Activated B cell treated with CpG ODN at 0.5 μM for 24 hours (primary cell): ENCODE measurements at regions of chrX and their contacts with region 1.

Region 1: DNA sequence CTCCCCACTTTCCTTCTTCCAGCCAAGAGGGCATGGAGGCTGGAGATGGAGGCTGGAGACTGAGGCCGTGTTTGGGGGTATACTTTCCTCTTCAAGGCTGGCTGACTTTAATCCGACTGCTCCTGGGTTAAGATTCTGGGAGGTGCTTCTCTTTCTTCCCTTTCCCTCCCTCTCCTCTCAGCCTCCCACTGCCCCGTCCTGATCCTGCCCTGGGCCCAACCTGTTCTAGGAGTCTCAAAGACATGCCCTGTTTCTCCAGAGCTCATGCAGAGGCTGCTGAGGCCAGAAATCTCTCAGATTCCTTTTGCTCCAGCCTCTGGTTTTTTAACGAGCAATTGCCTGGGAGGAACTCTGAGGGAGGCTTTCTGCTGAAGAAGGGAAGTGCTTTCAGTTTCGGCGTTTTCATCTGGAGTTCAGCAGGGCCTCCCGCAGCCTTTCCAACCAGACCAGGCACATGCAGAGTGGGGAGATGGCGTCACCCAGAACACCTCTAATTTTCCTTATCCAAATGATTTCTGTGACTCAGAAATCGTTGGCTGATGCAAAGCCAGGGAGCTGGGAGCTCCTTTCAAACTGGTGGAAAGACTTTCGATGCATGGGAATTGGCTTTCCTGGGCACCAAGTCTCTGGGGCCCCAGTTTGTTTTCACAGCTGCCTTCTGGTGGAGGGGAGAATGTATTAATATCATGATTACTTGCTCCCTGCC is 34.5 kb upstream of the FAM9C start:
- DNase-seq: no peak
- ATAC-seq: no peak
- H3K4me3 Mint-ChIP-seq: peak overlapping the region; percentile 56
- H3K27ac Mint-ChIP-seq: peak overlapping the region; percentile 89
- H3K4me1 Mint-ChIP-seq: peaks cover 94% of the 10 kb centered on the region
- H3K27me3 Mint-ChIP-seq: no peaks in the 10 kb centered on the region
- CTCF ChIP-seq: no peak

Region 2: DNA sequence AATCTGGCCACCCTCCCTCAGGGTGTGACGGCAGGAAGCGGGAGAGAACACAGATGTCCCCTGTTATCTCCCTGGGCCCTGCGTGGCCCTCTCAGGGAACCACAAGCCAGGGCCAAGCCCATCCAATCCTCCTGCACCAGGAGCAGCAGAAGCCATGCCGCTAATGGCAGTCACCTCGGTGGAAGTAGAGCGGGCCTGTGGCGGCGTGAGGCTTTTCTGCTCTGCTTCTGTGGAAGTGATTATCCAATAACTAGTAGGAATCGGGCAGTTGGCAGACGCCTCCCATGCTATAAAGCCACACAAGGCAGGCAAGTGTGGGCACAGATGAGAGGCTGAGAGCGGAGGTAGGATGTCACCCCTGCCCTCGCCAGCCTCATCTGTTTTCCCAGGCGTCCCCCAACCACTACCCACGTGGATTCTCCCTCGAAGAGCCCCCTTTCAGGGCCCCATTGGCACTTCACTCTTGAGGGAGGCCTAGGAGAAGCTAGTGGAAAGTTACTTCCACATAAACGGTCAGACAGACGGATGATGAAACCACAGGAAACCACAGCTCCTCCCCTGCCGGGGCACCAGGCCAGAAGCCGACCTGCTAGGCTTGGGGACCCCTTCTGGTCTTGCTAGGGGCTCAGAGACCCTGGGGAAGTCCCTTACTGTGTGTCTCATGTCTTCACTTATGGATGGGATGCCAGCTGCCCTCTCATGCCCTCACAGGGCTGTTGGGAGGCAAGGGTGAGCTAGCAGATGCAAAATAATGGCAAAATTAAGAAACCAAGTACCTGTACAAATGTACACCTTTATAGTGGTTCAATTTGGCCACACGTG is 122.8 kb before region 1 on chrX:
- CTCF ChIA-PET with region 1: interaction called, 8 read pairs
- POLR2A ChIA-PET with region 1: interaction called, 26 read pairs
- intact Hi-C with region 1: loop called (anchors 1 kb)
- DNase-seq: no peak
- ATAC-seq: peak; percentile 45
- H3K4me3 Mint-ChIP-seq: peak overlapping the region; percentile 79
- H3K27ac Mint-ChIP-seq: peak overlapping the region; percentile 96
- H3K4me1 Mint-ChIP-seq: peaks cover 79% of the 10 kb centered on the region
- H3K27me3 Mint-ChIP-seq: no peaks in the 10 kb centered on the region
- CTCF ChIP-seq: no peak

Region 3: DNA sequence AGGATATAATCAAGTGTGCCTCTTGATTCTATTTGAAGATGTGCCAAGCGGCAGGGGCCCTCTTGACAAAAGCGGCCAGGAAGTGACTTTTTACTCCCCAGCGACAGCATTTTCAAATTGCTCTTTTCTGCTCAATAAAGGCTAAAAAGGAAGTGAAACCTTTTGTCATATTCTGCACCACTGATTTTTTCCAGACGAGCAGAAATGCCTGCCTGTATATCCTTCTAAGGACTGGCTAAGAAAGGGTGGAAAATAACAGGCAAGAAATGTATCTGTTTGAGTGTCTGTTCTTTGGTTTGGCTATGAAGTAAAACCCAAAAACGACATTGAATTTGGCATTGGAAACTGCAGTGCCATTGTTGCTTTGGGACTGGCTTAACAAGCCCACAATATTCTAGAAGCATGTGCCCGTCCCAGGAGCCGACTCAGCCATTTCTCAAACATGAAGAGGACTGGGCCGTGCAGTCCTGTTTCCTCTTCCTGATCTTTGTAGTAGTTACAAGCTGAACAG is 78.5 kb before region 1 on chrX:
- CTCF ChIA-PET with region 1: interaction called, 6 read pairs
- POLR2A ChIA-PET with region 1: interaction called, 179 read pairs
- intact Hi-C with region 1: loop called (anchors 1 kb)
- DNase-seq: no peak
- ATAC-seq: peak; percentile 66
- H3K4me3 Mint-ChIP-seq: peak overlapping the region; percentile 64
- H3K27ac Mint-ChIP-seq: peak overlapping the region; percentile 92
- H3K4me1 Mint-ChIP-seq: peaks cover 72% of the 10 kb centered on the region
- H3K27me3 Mint-ChIP-seq: no peaks in the 10 kb centered on the region
- CTCF ChIP-seq: no peak

Region 4: DNA sequence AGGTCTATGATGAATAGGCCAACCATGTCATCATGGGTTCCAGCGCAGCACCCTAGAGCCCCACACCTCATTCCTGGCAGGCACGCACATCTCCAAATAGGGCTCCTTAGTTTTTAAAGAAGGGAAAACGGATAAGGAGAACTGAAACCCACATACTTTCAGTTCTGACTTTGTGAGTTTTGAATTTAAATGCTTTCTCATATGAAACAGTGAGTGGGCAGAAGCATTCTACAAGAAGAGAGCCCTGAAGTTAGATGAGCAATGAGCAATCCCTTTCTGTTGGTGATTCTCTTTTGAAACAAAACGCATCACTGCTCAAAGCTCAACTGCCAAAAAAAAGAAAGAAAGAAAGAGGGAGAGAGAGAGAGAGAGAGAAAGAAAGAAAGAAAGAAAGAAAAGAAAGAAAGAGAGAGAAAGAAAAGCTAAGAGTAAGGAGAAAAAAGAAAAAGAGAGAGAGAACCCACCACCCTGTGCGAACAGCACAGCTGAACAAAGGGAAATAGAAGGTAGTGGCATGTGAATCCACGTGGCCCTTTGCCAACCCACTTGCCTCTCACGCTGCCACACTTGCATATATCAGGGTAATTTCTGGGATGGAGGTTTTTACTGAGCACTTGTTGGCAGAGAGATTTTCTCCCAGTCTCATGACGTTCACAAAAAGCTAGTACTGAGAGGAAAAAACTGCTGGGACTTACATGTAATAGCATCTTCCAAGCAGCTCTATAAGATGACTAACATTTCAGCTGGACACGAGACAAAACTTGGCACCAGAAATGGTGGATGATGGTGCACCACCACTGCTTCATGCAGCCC is 73.0 kb before region 1 on chrX:
- CTCF ChIA-PET with region 1: interaction called, 6 read pairs
- POLR2A ChIA-PET with region 1: interaction called, 179 read pairs
- intact Hi-C with region 1: no loop called
- DNase-seq: no peak
- ATAC-seq: peak; percentile 61
- H3K4me3 Mint-ChIP-seq: peak overlapping the region; percentile 84
- H3K27ac Mint-ChIP-seq: peak overlapping the region; percentile 97
- H3K4me1 Mint-ChIP-seq: peaks cover 80% of the 10 kb centered on the region
- H3K27me3 Mint-ChIP-seq: no peaks in the 10 kb centered on the region
- CTCF ChIP-seq: no peak

Region 5: DNA sequence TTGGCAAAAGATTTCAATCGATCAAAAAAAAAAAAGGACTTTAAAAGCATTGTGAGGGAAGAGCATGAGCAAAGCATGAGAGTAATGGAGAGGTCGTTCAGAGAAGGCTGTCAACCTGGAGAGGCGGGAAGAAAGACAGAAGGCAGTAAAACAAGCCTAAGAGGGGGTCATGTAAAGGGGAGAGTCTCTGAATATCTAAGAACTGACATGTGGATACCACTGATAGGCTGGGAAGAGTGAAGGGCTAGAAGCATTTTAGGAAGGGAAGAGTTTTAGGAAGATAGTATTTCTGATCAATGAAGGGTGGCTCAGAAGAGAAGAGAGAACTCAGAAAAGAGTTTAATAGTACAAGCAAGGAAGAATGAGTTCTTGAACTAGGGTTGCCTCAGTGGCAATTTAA is 42.0 kb before region 1 on chrX:
- CTCF ChIA-PET with region 1: no interaction called
- POLR2A ChIA-PET with region 1: no interaction called
- intact Hi-C with region 1: loop called (anchors 5 kb)
- DNase-seq: no peak
- ATAC-seq: no peak
- H3K4me3 Mint-ChIP-seq: no peak overlapping the region
- H3K27ac Mint-ChIP-seq: no peak overlapping the region
- H3K4me1 Mint-ChIP-seq: peaks cover 13% of the 10 kb centered on the region
- H3K27me3 Mint-ChIP-seq: no peaks in the 10 kb centered on the region
- CTCF ChIP-seq: no peak

Region 6: DNA sequence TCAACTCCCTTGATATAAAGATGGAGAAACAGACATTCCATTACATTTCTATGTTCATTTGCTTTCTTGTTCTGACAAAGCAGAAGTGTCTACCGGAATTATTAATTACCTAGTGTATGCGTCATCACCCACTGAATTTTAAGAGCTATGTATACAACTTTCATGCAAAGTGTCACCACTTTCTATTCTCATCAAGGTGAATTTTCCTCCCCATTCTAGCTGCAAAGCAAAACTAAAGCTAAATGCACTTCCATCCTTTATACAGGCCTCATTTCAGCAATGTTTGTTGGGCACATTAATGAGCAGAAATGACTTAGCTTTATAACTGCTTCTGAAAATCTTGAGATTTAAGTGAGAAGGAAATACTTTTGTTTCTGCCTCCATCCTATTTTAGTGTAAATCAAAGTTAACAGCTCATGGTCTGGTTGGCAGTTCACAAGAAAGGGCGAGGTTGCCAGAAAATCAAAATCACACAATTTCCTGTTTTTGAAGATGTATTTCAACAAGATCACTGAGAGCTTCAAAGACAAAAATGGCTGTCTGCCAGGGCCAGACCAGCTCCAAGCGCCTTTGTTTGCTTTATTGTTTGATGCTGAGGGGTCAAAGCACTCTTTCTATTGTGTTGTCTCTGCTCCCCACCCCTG is 27.2 kb before region 1 on chrX:
- CTCF ChIA-PET with region 1: no interaction called
- POLR2A ChIA-PET with region 1: interaction called, 9 read pairs
- intact Hi-C with region 1: loop called (anchors 1 kb)
- DNase-seq: no peak
- ATAC-seq: peak; percentile 71
- H3K4me3 Mint-ChIP-seq: peak overlapping the region; percentile 19
- H3K27ac Mint-ChIP-seq: peak overlapping the region; percentile 82
- H3K4me1 Mint-ChIP-seq: peaks cover 57% of the 10 kb centered on the region
- H3K27me3 Mint-ChIP-seq: no peaks in the 10 kb centered on the region
- CTCF ChIP-seq: no peak